ENCODE measurements at regions of chr15 and their contacts with region 1.

Region 1: DNA sequence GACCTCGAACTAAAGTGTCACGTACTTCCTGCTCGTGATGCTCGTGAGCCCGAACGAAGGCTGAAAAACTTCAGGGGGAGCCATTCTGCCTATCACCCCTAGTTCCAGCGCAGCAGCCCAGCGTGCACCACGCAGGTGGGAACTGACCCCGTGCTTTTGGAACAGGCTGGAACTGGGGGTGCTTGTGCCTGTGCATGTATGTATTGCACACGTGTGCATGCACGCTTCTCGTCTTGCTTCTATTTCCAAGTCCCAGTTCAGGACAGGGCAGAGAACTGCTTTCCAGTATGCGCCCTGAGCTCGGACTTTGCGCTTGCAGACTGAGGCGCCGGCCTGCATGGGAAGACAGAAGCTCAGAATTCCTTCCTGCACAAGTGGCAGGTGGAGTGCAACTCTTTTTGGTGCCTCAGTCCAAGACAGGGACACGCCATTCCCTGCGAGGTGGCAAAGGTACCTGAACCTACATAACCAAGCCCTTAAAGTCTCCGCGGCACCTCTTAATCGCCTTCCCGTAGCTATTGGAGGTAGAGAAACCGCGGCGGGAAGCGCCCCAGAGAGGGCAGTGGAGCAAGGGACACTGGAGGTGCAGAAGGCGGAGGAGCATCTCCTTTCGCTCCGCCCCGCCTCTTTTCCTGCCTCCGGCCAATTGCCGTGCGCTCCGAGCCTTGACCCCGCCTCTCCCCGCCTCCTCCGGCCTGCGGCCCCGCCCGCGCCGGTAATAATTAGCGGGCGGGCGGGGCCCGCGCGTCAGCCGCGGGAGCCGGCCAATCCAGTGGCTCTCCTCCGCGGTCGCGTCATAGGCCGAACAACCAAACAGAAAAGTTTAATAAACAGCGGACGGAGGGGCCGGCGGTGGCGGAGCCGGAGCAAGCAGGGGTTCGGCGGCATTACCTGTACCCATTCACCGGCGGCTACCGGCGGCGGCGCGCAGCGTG is at the start of gene ZFAND6:
- DNase-seq: peak; percentile 97
- ATAC-seq: peak; percentile 83
- H3K4me3 Mint-ChIP-seq: peak within 1 kb of the TSS; percentile 85
- H3K27ac Mint-ChIP-seq: peak within 1 kb of the TSS; percentile 87
- H3K4me1 Mint-ChIP-seq: peaks cover 25% of the 10 kb centered on the region
- H3K27me3 Mint-ChIP-seq: no peaks in the 10 kb centered on the region
- total RNA-seq, gene ZFAND6: 30.2 to 37.2 TPM

Region 2: GRCh38 chr15:78872972-78873792 is 1185.9 kb before region 1 on chr15:
- CTCF ChIA-PET with region 1: no interaction called
- POLR2A ChIA-PET with region 1: no interaction called
- intact Hi-C with region 1: loop called in 1 of 2 experiments (anchors 2 kb)
- DNase-seq: peak; percentile 96
- ATAC-seq: peak; percentile 80
- H3K4me3 Mint-ChIP-seq: peak overlapping the region; percentile 99
- H3K27ac Mint-ChIP-seq: peak overlapping the region; percentile 99
- H3K4me1 Mint-ChIP-seq: peaks cover 34% of the 10 kb centered on the region
- H3K27me3 Mint-ChIP-seq: no peaks in the 10 kb centered on the region

Region 3: DNA sequence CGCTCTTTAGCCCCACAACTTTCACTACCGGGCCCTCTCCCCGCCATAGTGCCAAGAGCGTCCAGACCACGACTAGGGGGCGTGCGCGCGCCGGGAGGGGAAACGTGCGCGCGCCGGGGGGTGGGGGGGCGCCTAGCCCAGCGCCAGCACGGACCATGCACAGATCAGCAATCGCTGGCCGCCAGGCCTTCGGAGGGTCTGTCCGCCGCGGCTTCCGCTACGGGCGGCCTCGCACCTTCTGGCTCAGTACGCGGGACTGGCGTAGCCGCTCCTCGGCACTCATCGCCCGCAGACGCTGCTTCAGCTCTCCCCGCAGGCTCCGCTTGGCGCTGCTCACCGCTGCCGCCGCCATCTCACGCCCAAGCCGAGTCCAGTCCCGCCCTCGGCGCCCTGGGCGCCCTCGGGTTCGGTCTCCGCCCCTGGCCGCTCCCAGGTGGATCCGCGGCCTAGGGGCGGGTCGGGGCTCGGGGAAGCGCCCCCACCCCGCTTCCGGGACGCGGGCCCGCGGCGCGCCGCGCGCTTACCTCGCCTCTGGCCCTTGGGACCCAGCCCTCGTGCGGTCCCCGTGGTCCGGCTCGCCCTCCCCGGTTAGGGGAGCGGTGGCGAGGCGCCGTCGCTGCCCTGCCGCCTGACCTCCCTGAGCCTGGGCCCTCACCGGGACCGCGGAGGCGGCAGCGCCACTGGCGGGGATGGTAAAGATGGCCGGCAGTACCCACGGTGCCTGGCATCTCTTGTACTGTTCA is 162.3 kb before region 1 on chr15 and contains the start of gene MTHFS:
- CTCF ChIA-PET with region 1: no interaction called
- POLR2A ChIA-PET with region 1: no interaction called
- intact Hi-C with region 1: loop called (anchors 1 to 10 kb)
- DNase-seq: peak; percentile 87
- ATAC-seq: peak; percentile 81
- H3K4me3 Mint-ChIP-seq: peak within 1 kb of the TSS; percentile 97
- H3K27ac Mint-ChIP-seq: peak within 1 kb of the TSS; percentile 100
- H3K4me1 Mint-ChIP-seq: peaks cover 46% of the 10 kb centered on the region
- H3K27me3 Mint-ChIP-seq: no peaks in the 10 kb centered on the region
- total RNA-seq, gene MTHFS: 36.1 to 48.5 TPM

Region 4: GRCh38 chr15:80031841-80032240 is 27.3 kb before region 1 on chr15:
- CTCF ChIA-PET with region 1: no interaction called
- POLR2A ChIA-PET with region 1: no interaction called
- intact Hi-C with region 1: loop called in 1 of 2 experiments (anchors 2 kb)
- DNase-seq: peak; percentile 64
- ATAC-seq: peak; percentile 85
- H3K4me3 Mint-ChIP-seq: no peak overlapping the region
- H3K27ac Mint-ChIP-seq: peak overlapping the region; percentile 72
- H3K4me1 Mint-ChIP-seq: peaks cover 25% of the 10 kb centered on the region
- H3K27me3 Mint-ChIP-seq: no peaks in the 10 kb centered on the region

Region 5: DNA sequence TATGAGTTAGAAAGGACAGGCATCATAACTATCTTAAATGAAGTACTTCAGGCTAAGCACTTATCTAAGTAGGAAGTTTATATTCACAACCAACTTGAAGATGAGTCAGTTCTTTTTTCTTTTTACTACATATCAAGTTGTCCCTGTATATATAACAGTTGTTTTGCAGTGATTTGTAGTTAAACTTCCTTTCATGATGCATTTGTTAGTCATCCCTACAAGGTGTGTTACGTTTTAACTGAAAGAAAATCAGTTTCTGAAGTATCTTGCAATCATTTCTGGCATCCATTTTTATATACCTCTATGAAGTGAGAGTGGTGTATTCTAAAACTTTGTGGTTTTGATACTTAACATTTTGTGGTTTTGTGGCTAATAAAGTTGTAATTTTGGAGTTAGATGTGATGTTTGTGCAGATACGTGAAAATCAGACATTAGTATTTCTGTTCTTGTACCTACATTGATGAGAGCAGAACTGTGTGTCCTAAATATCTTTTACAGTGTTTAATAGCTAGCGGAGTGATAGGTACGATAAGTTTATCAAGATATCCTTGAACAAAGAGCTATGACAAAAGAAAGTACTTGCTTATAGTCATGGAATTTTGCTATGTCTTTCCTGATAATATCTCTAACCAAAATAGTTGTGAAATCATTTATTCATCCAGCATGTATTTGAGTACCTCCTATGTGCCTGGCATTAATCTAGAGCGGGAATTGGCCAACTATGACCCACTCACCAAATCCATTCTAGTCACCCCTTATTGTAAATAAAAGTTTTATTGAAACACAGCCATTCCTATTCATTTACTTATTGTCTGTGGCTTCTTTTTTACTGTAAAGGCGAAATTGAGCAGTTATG is 46.7 kb after region 1 on chr15:
- CTCF ChIA-PET with region 1: interaction called, 5 read pairs
- POLR2A ChIA-PET with region 1: no interaction called
- intact Hi-C with region 1: loop called in 1 of 2 experiments (anchors 2 kb)
- DNase-seq: no peak
- ATAC-seq: peak; percentile 97
- H3K4me3 Mint-ChIP-seq: no peak overlapping the region
- H3K27ac Mint-ChIP-seq: peak overlapping the region; percentile 20
- H3K4me1 Mint-ChIP-seq: peaks cover 51% of the 10 kb centered on the region
- H3K27me3 Mint-ChIP-seq: no peaks in the 10 kb centered on the region

Region 6: DNA sequence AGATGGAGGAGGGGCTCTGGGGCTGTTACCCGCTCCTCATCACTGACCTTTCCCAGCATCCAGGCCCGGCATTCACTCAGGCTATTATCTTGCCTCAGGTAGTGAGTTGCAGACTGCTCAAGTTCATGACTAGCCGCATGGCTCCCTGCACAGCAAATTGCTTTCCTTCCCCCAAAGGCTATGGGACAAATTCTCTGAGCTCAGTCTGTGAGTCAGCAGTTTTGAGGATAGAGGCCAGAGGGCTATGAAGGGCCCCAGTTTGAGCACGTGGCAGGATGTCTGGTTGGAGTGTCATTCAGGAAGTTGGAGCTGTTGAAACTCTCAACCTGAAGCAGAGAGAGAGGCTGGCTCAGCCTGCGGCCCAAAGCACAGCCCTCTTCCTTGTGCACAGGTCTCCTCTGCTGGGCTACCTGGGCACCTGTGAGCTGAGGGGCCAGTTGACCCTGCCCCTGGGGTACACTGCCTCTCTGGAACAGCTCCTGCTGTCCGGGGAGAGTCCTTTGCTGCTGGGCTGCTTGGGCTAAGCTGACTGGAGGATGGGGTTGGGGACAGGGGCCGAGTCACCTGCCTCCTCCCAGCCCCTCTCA is 101.5 kb after region 1 on chr15:
- CTCF ChIA-PET with region 1: no interaction called
- POLR2A ChIA-PET with region 1: no interaction called
- intact Hi-C with region 1: loop called in 1 of 2 experiments (anchors 2 kb)
- DNase-seq: peak; percentile 77
- ATAC-seq: peak; percentile 96
- H3K4me3 Mint-ChIP-seq: no peak overlapping the region
- H3K27ac Mint-ChIP-seq: peak overlapping the region; percentile 70
- H3K4me1 Mint-ChIP-seq: peaks cover 24% of the 10 kb centered on the region
- H3K27me3 Mint-ChIP-seq: no peaks in the 10 kb centered on the region

Measured in activated CD4-positive, alpha-beta T cell treated with anti-CD3 and anti-CD28 coated beads for 36 hours (primary cell).